Transverse colon (tissue), 4 donors: ENCODE measurements at regions of chr10 and their contacts with region 1.

Region 1: GRCh38 chr10:72009411-72010081 is 45.4 kb downstream of the CHST3 start:
- DNase-seq: peak; percentile 81
- H3K4me3 ChIP-seq: no peak overlapping the region
- H3K27ac ChIP-seq: peak overlapping the region; percentile 75 to 94 (median 85)
- H3K4me1 ChIP-seq: peaks cover 15 to 23% (median 21%) of the 10 kb centered on the region in 4 donors
- H3K27me3 ChIP-seq: no peaks in the 10 kb centered on the region
- CTCF ChIP-seq: no peak
- EP300 ChIP-seq: peak; percentile 58
- POLR2A ChIP-seq: no peak

Region 2: DNA sequence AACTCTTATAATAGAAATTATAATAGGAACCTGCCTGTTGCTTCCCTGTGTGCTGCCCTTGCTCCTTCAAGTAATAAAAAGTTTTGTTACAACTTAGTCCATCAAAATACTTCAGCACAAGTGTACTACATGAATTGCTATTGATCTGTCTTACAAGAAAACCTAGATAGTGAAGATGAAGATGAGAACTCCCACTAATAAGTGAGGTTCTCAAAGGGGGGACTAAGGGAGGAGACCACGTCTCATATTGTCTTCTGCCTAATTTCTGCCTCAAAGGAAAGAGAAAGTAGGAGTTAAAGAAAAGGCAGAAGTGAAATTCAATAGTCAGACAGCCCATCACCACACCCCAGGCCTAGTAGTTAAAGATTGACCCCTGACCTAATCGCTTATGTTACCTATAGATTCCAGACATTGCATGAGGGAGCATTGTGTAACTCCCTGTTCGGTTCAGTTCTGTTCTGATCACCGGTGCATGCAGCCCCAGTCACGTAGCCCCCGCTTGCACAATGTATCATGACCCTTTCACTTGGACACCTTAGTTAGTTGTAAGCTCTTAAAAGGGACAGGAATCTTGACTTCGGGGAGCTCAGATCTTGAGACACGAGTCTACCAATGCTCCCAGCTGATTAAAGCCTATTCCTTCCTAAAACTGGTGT is 63.6 kb before region 1 on chr10:
- in situ Hi-C with region 1: no loop called
- intact Hi-C with region 1: no loop called
- DNase-seq: no peak
- H3K4me3 ChIP-seq: no peak overlapping the region
- H3K27ac ChIP-seq: no peak overlapping the region
- H3K4me1 ChIP-seq: no peaks in the 10 kb centered on the region
- H3K27me3 ChIP-seq: no peaks in the 10 kb centered on the region
- CTCF ChIP-seq: no peak
- EP300 ChIP-seq: no peak
- POLR2A ChIP-seq: no peak

Region 3: DNA sequence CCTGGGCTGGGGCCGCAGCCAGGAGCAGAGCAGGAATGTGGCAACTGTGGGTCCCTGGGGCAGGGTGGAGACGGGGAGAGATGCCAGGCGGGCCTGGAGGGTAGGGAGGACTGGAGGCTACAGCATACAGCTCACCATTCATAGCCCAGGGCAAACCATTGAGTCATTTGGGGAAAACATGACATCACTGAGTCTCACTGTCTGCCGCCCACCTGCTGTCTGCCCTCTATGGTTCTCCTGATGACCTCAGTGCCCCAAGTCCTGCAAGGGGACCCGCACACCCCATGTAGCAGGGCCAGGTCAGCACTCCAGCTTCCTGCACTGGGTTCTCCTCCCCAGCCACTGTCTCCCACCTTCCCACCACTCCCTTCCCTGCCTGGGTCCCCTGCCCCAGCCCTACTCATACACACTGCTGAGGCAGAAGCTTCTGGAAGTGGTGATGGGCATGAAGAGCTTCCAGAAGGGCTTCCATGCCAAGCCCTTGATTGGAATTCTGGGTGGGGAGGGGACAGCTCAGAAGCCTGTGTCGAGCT is 35.0 kb before region 1 on chr10:
- in situ Hi-C with region 1: no loop called
- intact Hi-C with region 1: loop called (anchors 5 kb)
- DNase-seq: no peak
- H3K4me3 ChIP-seq: no peak overlapping the region
- H3K27ac ChIP-seq: peak overlapping the region; percentile 65 to 83 (median 78)
- H3K4me1 ChIP-seq: peaks cover 22 to 51% (median 36%) of the 10 kb centered on the region in 4 donors
- H3K27me3 ChIP-seq: no peaks in the 10 kb centered on the region
- CTCF ChIP-seq: no peak
- EP300 ChIP-seq: no peak
- POLR2A ChIP-seq: no peak